ENCODE measurements at regions of chr15 and their contacts with region 1.

Region 1: DNA sequence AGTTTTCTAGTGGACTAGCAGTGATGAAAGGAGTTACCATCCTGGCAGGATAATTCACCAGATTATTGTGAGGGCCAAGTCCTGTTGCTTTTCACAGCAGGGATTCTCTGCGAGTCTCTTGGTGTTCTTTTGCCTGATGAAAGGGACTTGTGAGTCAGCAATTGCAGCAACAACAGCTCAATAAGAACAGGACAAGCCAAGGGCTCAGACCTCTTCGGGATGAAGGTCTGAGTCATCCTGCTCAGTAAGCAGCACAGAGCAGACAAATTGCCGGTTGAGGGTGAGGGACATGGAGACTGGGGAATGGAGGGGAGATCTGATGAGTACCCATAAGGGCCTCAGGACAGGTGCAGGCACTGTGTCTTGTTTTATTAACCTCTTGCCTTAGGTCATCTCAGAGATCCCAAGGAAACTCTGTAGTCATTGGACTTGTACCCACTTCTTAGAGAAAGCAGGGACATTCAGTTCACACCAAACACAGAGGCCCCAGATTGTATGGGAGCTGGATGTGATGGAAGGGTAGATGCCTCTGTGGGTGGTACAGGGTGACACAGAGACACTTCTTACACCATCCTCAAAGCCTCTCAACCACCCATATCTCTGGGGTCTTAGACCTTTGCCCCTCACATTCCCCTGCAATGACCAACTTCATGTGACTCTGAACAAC is 173.8 kb upstream of the TLE3 start:
- DNase-seq: no peak
- H3K4me3 ChIP-seq: no peak overlapping the region
- H3K27ac ChIP-seq: peak overlapping the region; percentile 15 to 79
- H3K4me1 ChIP-seq: peaks cover 0 to 14% of the 10 kb centered on the region in 2 donors
- H3K27me3 ChIP-seq: no peaks in the 10 kb centered on the region
- CTCF ChIP-seq: no peak
- POLR2A ChIP-seq: no peak

Region 2: DNA sequence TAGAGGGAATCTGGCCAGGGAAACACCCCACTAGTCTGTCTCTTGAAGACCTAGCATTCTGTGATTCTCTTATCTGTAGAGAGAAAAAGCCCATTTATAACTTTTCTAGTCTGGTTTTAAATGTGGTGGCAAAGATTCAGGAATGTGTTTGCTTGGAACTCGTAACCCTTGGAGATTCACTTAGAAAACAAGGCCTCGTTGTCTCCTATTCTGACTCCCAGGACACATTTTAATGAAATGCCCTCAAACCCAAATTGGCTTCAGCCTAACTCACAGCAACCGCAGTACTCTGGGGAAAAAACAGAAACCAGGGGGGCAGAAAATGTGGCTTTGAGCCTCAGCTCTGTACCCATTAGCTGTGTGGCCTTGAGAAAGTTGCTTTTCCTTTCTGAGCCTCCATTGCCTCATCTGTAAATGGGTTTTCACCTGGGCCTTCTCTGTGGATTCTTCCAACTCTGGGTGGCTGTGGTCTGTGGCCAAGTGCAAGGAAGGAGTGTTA is 782.4 kb before region 1 on chr15:
- intact Hi-C with region 1: loop called (anchors 10 kb)
- DNase-seq: peak in 1 of 2 donors; percentile 41
- H3K4me3 ChIP-seq: no peak overlapping the region
- H3K27ac ChIP-seq: peak overlapping the region; percentile 57 to 70
- H3K4me1 ChIP-seq: peaks cover 0 to 13% of the 10 kb centered on the region in 2 donors
- H3K27me3 ChIP-seq: no peaks in the 10 kb centered on the region
- CTCF ChIP-seq: no peak
- POLR2A ChIP-seq: no peak

Region 3: GRCh38 chr15:69794645-69795461 is 476.7 kb before region 1 on chr15:
- intact Hi-C with region 1: no loop called
- DNase-seq: peak in 1 of 2 donors; percentile 76
- H3K4me3 ChIP-seq: no peak overlapping the region
- H3K27ac ChIP-seq: peak overlapping the region; percentile 72 to 80
- H3K4me1 ChIP-seq: no peaks in the 10 kb centered on the region
- H3K27me3 ChIP-seq: no peaks in the 10 kb centered on the region
- CTCF ChIP-seq: no peak
- POLR2A ChIP-seq: no peak

Region 4: DNA sequence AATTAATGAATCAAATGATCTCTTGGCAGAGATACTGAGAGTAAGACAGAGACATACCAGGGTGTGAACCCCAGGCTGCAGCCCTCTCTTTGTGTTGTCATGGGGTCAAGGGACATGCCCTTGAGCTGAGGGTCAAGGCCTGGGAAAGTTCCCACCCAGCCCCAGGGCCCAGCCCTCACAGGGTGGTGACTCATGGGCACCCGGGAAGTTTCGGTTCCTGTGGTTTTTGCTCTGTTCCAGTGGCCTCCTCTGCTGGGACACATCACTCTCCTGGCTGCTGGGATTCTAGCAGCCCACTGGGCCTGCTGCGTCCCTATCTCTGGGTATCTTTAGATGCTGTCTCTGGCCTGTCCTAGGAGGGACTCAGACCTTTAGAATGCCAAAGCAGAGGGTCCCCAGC is 25.6 kb before region 1 on chr15:
- intact Hi-C with region 1: no loop called
- DNase-seq: peak in 1 of 2 donors; percentile 38
- H3K4me3 ChIP-seq: no peak overlapping the region
- H3K27ac ChIP-seq: no peak overlapping the region
- H3K4me1 ChIP-seq: no peaks in the 10 kb centered on the region
- H3K27me3 ChIP-seq: no peaks in the 10 kb centered on the region
- CTCF ChIP-seq: no peak
- POLR2A ChIP-seq: no peak